Activated CD8-positive, alpha-beta T cell treated with anti-CD3 and anti-CD28 coated beads for 36 hours (primary cell): ENCODE measurements at regions of chr16 and their contacts with region 1.

Region 1: DNA sequence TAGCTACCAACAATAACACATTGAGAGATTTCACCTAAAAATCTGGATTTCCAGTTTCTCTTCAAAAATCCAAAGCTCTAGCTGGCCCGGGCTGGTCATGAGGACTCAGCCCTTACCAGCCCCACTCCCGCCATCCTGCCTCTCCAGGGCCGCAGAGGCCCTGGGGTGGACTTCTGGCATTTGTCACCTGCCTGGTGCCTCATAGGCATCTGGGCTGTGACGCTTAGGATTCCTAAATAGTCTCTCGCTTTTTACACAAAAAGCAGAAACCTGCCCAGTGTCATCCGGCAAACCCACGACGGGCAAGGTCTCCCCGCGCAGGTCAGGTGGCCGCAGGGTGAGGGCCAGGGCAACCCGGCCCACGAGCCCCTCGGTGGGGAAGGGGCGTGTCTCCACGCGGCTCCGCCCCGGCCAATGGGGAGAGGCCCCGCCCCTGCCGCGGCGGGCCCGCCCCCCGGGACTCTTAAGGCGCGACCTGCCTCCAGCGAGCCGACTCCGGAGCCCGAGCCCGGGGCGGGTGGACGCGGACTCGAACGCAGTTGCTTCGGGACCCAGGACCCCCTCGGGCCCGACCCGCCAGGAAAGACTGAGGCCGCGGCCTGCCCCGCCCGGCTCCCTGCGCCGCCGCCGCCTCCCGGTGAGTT is at the start of gene VASN:
- DNase-seq: peak; percentile 70
- ATAC-seq: peak; percentile 94
- H3K4me3 Mint-ChIP-seq: peak within 1 kb of the TSS; percentile 59
- H3K27ac Mint-ChIP-seq: no peak within 1 kb of the TSS
- H3K4me1 Mint-ChIP-seq: peaks cover 7% of the 10 kb centered on the region
- H3K27me3 Mint-ChIP-seq: no peaks in the 10 kb centered on the region
- CTCF ChIP-seq: no peak
- total RNA-seq, gene VASN: not detected

Region 2: GRCh38 chr16:4358831-4359561 is 12.5 kb before region 1 on chr16:
- CTCF ChIA-PET with region 1: interaction called, 15 read pairs
- POLR2A ChIA-PET with region 1: interaction called, 4 read pairs
- intact Hi-C with region 1: no loop called
- DNase-seq: peak; percentile 75
- ATAC-seq: peak; percentile 90
- H3K4me3 Mint-ChIP-seq: no peak overlapping the region
- H3K27ac Mint-ChIP-seq: peak overlapping the region; percentile 64
- H3K4me1 Mint-ChIP-seq: no peaks in the 10 kb centered on the region
- H3K27me3 Mint-ChIP-seq: no peaks in the 10 kb centered on the region
- CTCF ChIP-seq: peak; percentile 89